ENCODE measurements at regions of chr7 and their contacts with region 1.

Region 1: DNA sequence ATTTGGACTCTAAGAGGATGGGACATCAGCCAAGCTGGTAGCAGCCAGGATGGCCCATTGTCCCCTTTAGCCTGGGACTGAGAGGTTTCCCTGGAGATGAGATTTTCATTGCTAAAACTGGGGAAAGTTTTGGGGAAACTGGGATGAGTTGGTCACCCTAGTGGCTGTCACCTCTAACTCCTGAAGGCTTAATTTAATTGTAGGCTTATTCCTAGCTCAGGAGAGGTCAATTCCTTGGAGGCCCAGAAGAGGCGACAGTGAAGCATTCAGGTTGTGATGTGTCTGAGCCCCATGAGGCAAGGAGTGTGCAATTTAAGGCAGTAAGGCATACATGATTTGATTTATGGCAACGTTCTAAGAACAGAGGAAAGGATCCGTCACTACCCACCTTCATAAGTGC is 24.9 kb upstream of the JAZF1 start:
- DNase-seq: no peak
- ATAC-seq: peak; percentile 90
- H3K4me3 Mint-ChIP-seq: no peak overlapping the region
- H3K27ac Mint-ChIP-seq: no peak overlapping the region
- H3K4me1 Mint-ChIP-seq: peaks cover 4% of the 10 kb centered on the region; the same call in 1 of the 2 replicates
- H3K27me3 Mint-ChIP-seq: no peaks in the 10 kb centered on the region
- CTCF ChIP-seq: no peak

Region 2: DNA sequence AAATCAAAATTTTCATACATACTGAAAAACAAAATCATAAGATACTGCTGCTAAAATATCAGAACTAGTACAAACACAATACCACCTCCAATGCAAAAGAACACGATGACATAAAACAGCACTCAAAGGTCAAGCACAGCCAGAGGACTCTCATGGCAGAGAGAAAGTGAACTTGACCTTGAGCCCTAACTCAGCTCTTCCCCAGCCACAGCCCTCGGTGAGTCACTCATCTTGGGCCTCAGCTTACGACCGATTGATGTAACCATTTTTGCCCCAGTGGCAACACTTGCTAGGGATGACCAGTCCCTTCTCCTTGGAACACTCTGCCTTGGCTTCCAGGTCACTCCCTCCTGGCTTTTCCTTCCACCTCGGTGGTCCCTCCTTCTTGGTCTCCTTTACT is 102.7 kb before region 1 on chr7:
- CTCF ChIA-PET with region 1: no interaction called
- POLR2A ChIA-PET with region 1: no interaction called
- DNase-seq: no peak
- ATAC-seq: no peak
- H3K4me3 Mint-ChIP-seq: no peak overlapping the region
- H3K27ac Mint-ChIP-seq: 0 out of 2 replicates have a peak overlapping the region, but pooled peaks have one; percentile 34
- H3K4me1 Mint-ChIP-seq: peaks cover 59% of the 10 kb centered on the region
- H3K27me3 Mint-ChIP-seq: no peaks in the 10 kb centered on the region
- CTCF ChIP-seq: no peak

Region 3: GRCh38 chr7:28165961-28166955 is 39.2 kb before region 1 on chr7:
- CTCF ChIA-PET with region 1: no interaction called
- POLR2A ChIA-PET with region 1: no interaction called
- DNase-seq: no peak
- ATAC-seq: no peak
- H3K4me3 Mint-ChIP-seq: no peak overlapping the region
- H3K27ac Mint-ChIP-seq: no peak overlapping the region
- H3K4me1 Mint-ChIP-seq: peaks cover 49% of the 10 kb centered on the region
- H3K27me3 Mint-ChIP-seq: no peaks in the 10 kb centered on the region
- CTCF ChIP-seq: no peak

Region 4: GRCh38 chr7:28192786-28193585 is 12.5 kb before region 1 on chr7:
- CTCF ChIA-PET with region 1: interaction called, 11 read pairs
- POLR2A ChIA-PET with region 1: no interaction called
- DNase-seq: no peak
- ATAC-seq: peak; percentile 48
- H3K4me3 Mint-ChIP-seq: no peak overlapping the region
- H3K27ac Mint-ChIP-seq: no peak overlapping the region
- H3K4me1 Mint-ChIP-seq: peaks cover 39% of the 10 kb centered on the region
- H3K27me3 Mint-ChIP-seq: peaks cover 2% of the 10 kb centered on the region; the same call in 1 of the 2 replicates
- CTCF ChIP-seq: no peak

Region 5: GRCh38 chr7:28290496-28290895 is 85.0 kb after region 1 on chr7:
- CTCF ChIA-PET with region 1: no interaction called
- POLR2A ChIA-PET with region 1: no interaction called
- DNase-seq: no peak
- ATAC-seq: no peak
- H3K4me3 Mint-ChIP-seq: no peak overlapping the region
- H3K27ac Mint-ChIP-seq: peak overlapping the region; percentile 96
- H3K4me1 Mint-ChIP-seq: peaks cover 64% of the 10 kb centered on the region
- H3K27me3 Mint-ChIP-seq: no peaks in the 10 kb centered on the region
- CTCF ChIP-seq: no peak

Region 6: GRCh38 chr7:28329661-28330363 is 124.3 kb after region 1 on chr7:
- CTCF ChIA-PET with region 1: no interaction called
- POLR2A ChIA-PET with region 1: no interaction called
- DNase-seq: no peak
- ATAC-seq: no peak
- H3K4me3 Mint-ChIP-seq: no peak overlapping the region
- H3K27ac Mint-ChIP-seq: peak overlapping the region; percentile 14; the same call in 1 of the 2 replicates
- H3K4me1 Mint-ChIP-seq: peaks cover 10% of the 10 kb centered on the region; the same call in 1 of the 2 replicates
- H3K27me3 Mint-ChIP-seq: no peaks in the 10 kb centered on the region
- CTCF ChIP-seq: no peak

Measured in WTC11 (cell line).